PC-9 (cell line): ENCODE measurements at regions of chr12 and their contacts with region 1.

Region 1: DNA sequence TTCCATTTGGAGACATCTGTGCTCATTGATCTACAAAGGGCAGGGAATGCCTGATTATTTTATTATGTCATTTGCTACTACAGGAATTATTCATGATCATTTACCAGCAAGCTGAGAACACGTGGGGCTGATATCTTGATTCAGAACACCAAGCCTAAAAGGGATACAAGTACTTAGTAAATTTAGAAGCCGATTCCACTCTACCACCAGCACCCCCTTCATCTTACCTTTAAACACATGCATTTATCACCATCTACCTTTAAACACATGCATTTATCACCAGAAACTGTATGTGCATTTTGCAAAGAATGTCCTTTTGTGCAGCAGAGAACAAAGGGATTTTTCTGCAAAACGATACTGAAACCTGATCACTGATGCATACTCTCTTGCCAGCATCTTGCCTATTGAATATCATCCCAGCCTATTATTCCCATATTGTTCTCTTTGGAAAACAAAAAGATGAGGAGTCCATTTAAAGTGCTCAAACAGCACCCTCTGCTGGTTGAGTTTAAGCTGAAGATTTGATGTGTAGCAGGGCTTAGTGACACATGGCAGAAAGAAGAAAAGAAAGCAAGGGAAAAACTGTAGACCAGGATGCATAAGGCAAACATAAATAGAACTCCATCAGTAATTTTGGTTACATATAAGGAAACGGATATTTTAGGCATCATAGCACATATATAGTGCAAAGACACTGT is 132.6 kb upstream of the PLEKHG7 start:
- DNase-seq: peak; percentile 54 to 61
- H3K4me3 ChIP-seq: no peak overlapping the region
- H3K27ac ChIP-seq: no peak overlapping the region
- H3K4me1 ChIP-seq: 0 out of 2 replicates have a peak, but pooled peaks cover 5% of the 10 kb centered on the region
- H3K27me3 ChIP-seq: no peaks in the 10 kb centered on the region
- CTCF ChIP-seq: peak; percentile 93

Region 2: GRCh38 chr12:91361864-91362263 is 1208.3 kb before region 1 on chr12:
- CTCF ChIA-PET with region 1: no interaction called
- POLR2A ChIA-PET with region 1: no interaction called
- intact Hi-C with region 1: loop called (anchors 1 kb)
- DNase-seq: peak in 1 of 2 experiments; percentile 37
- H3K4me3 ChIP-seq: no peak overlapping the region
- H3K27ac ChIP-seq: no peak overlapping the region
- H3K4me1 ChIP-seq: no peaks in the 10 kb centered on the region; the same call in 1 of the 2 replicates
- H3K27me3 ChIP-seq: no peaks in the 10 kb centered on the region
- CTCF ChIP-seq: peak; percentile 80

Region 3: DNA sequence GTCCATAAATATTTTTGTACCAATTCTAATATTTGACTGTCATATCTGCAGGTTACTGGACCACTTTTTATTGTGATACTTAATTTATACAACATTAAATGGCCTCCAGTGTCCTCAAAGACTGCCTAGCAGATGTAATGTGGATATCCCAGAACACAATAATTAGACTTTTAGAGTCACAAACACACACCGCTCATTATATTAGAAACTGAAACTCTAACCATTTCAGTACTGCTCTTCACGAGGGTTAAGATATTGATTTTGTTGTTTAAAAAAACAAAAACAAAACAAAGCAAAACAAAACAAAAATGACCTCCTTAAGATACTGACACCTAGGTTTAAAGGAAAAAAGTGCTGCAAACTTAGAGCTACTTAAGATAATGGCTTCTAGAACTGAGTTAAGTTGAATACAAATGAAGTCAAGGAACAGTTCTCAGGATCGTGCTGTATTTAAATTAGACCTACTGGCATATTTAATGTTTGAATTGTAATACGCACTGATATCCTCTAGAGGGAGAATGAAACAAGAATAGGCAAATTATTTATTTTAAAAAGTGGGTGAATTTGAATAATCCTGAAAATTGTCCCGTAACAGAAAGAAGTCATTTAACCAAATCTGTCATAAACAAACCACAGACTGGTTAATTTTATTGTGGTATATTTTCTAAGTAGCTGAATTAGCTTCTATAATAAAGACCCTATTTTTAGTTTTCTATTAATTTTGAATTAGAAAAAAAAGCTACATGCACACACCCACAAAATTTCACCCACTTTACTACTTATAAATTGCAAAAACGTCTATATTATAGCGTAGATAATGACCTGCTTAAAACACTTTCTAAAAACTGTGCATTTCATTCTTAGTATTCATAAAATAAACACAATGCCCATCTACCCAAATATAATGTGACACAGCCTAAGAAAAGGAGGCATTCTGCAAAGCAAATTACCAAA is 992.3 kb before region 1 on chr12:
- CTCF ChIA-PET with region 1: no interaction called
- POLR2A ChIA-PET with region 1: no interaction called
- intact Hi-C with region 1: loop called (anchors 2 kb)
- DNase-seq: no peak
- H3K4me3 ChIP-seq: peak overlapping the region; percentile 49; the same call in 1 of the 2 replicates
- H3K27ac ChIP-seq: no peak overlapping the region
- H3K4me1 ChIP-seq: 0 out of 2 replicates have a peak, but pooled peaks cover 4% of the 10 kb centered on the region
- H3K27me3 ChIP-seq: no peaks in the 10 kb centered on the region
- CTCF ChIP-seq: peak; percentile 81

Region 4: DNA sequence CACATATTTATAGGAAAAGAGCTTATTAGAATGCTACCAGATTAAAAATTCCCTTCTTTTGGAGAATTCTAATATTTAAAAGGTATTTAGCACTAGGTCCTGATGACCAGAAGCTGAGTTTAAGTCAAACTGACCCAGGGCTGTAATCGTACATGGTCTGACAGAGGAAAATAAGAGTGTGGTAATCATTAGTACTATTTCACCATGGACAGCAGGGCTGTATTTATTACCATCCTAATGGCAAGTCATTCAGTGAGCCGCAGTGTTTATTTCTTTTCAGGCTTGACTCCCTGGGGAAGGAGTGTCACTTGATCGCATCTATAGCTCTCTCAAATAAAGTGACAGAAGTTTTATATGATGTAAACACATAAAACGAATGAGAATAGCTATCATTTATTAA is 686.4 kb before region 1 on chr12:
- CTCF ChIA-PET with region 1: no interaction called
- POLR2A ChIA-PET with region 1: no interaction called
- intact Hi-C with region 1: loop called (anchors 1 kb)
- DNase-seq: no peak
- H3K4me3 ChIP-seq: no peak overlapping the region
- H3K27ac ChIP-seq: no peak overlapping the region
- H3K4me1 ChIP-seq: peaks cover 29% of the 10 kb centered on the region
- H3K27me3 ChIP-seq: no peaks in the 10 kb centered on the region
- CTCF ChIP-seq: no peak

Region 5: DNA sequence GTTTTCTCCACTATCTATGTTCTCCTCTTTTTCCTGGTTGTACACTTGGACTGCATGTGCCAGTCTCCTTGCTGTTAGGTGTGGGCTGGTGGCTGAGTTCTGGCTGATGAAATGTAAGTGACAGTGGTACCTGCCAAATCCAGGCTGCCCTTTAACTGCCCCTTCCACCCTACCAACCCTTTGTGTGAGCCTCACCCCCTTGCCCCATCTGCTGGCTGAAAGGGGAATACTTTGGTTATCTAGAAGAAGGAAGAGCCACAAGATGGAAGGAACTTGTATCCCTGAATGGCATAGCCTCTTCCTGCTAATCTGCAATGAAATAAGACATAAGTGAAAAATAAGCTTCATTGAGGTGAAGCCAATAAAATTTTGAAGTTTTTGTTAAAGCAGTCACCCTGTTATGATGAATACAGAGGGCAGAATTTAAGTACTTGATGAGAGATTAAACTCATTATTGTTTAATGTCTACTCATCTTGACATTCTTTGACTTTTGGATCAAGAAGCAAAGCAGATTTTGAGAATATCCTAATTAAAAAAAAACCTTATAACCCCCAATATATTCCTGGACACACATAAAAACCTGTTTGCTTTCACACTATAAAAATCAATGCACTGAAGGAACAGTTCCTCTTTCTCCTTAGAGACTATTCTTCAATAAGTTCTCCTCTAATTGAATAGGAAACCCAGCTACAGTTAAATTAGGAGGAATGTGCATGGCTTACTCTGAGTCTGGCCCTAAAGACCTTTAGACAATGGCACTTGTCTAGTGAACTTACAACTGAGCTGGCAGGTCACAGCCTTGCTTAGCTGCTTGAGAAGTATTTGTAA is 161.9 kb before region 1 on chr12:
- CTCF ChIA-PET with region 1: no interaction called
- POLR2A ChIA-PET with region 1: interaction called, 3 read pairs
- intact Hi-C with region 1: loop called (anchors 10 kb)
- DNase-seq: peak; percentile 38 to 39
- H3K4me3 ChIP-seq: no peak overlapping the region
- H3K27ac ChIP-seq: no peak overlapping the region
- H3K4me1 ChIP-seq: no peaks in the 10 kb centered on the region
- H3K27me3 ChIP-seq: no peaks in the 10 kb centered on the region
- CTCF ChIP-seq: peak; percentile 67